ENCODE measurements at regions of chr17 and their contacts with region 1.

Region 1: GRCh38 chr17:47941236-47941994 is at the start of gene PNPO:
- DNase-seq: peak; percentile 74
- ATAC-seq: peak; percentile 99
- H3K4me3 Mint-ChIP-seq: peak within 1 kb of the TSS; percentile 91
- H3K27ac Mint-ChIP-seq: peak within 1 kb of the TSS; percentile 91
- H3K4me1 Mint-ChIP-seq: peaks cover 41% of the 10 kb centered on the region
- H3K27me3 Mint-ChIP-seq: no peaks in the 10 kb centered on the region
- CTCF ChIP-seq: no peak
- total RNA-seq, gene PNPO: 25.1 and 26.5 TPM in 2 replicates

Region 2: DNA sequence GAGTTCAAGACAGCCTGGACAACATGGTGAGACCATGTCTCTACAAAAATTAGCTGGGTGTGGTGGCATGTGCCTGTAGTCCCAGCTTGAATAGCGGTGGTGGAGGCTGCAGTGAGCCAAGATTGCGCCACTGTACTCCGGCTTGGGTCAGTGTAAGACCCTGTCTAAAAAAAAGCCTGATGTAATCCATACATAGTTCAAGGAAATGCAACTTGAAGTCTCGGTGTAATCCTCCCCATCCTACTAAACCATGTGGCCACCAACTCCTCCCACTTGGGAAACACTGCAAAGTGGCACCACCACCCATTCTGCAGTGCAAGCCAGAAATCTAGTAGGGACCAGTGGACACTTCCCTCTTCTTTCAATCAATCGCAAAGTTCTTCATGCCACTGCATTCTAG is 297.1 kb before region 1 on chr17:
- CTCF ChIA-PET with region 1: no interaction called
- POLR2A ChIA-PET with region 1: no interaction called
- intact Hi-C with region 1: no loop called
- DNase-seq: no peak
- ATAC-seq: no peak
- H3K4me3 Mint-ChIP-seq: no peak overlapping the region
- H3K27ac Mint-ChIP-seq: no peak overlapping the region
- H3K4me1 Mint-ChIP-seq: peaks cover 25% of the 10 kb centered on the region
- H3K27me3 Mint-ChIP-seq: no peaks in the 10 kb centered on the region
- CTCF ChIP-seq: no peak

Region 3: GRCh38 chr17:47675380-47676198 is 265.8 kb before region 1 on chr17:
- CTCF ChIA-PET with region 1: no interaction called
- POLR2A ChIA-PET with region 1: no interaction called
- intact Hi-C with region 1: no loop called
- DNase-seq: no peak
- ATAC-seq: no peak
- H3K4me3 Mint-ChIP-seq: no peak overlapping the region
- H3K27ac Mint-ChIP-seq: peak overlapping the region; percentile 41
- H3K4me1 Mint-ChIP-seq: peaks cover 5% of the 10 kb centered on the region
- H3K27me3 Mint-ChIP-seq: no peaks in the 10 kb centered on the region
- CTCF ChIP-seq: no peak

Region 4: GRCh38 chr17:47789611-47790561 is 151.5 kb before region 1 on chr17:
- CTCF ChIA-PET with region 1: no interaction called
- POLR2A ChIA-PET with region 1: no interaction called
- intact Hi-C with region 1: no loop called
- DNase-seq: peak; percentile 48
- ATAC-seq: peak; percentile 80
- H3K4me3 Mint-ChIP-seq: peak overlapping the region; percentile 74
- H3K27ac Mint-ChIP-seq: no peak overlapping the region
- H3K4me1 Mint-ChIP-seq: peaks cover 9% of the 10 kb centered on the region
- H3K27me3 Mint-ChIP-seq: peaks cover 54% of the 10 kb centered on the region
- CTCF ChIP-seq: no peak

Region 5: GRCh38 chr17:47831003-47831933 is 110.1 kb before region 1 on chr17 and contains the starts of genes LRRC46 and MRPL10:
- CTCF ChIA-PET with region 1: no interaction called
- POLR2A ChIA-PET with region 1: interaction called, 10 read pairs
- intact Hi-C with region 1: no loop called
- DNase-seq: peak; percentile 87
- ATAC-seq: peak; percentile 96
- H3K4me3 Mint-ChIP-seq: peak within 1 kb of the TSS; percentile 96
- H3K27ac Mint-ChIP-seq: peak within 1 kb of the TSS; percentile 92
- H3K4me1 Mint-ChIP-seq: peaks cover 29% of the 10 kb centered on the region
- H3K27me3 Mint-ChIP-seq: no peaks in the 10 kb centered on the region
- CTCF ChIP-seq: no peak
- total RNA-seq, gene LRRC46: 1.5 and 1.9 TPM in 2 replicates
- total RNA-seq, gene MRPL10: 36.4 and 37.4 TPM in 2 replicates

Region 6: DNA sequence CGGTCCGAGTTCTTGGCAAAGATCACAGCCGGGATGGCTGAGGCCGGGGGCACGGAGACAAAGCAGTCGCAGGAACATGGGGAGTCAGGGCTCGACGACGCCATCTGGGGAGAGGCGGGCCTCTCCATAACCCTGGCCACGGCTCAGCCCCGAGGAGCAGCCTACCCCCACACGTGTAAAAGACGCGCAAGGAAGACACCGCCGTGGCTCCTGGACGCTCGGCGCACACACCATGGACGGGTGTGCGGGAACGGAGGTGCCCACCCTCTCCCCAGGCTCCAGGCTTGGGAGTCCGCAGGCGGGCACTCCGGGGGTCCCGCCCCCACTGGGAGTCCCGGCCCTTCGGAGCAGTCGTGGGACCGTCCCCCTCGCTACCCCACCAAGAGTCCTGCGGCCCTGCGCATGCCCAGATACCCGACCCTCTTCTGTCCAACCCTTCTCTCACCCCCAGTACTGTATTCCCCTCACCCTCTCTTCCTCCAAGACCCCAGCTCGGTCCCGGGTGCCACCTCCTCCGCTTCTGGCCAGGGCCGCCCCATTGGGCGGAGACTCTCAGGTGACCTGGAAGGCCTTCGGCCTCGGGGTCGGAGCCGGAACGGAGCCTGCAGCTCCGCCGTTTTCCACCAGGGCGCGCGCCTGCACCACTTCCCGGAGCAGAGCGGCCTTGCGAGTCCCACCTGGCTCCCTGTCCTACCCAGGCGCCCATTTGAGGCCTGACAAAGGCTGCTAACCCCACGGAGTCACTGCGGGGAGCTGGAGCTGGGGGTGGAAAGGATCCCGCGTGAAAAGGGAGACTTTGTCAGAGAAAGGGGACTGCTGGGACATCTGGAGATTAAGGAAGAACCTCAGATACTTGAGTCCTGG is 100.4 kb before region 1 on chr17 and contains the start of gene SCRN2:
- CTCF ChIA-PET with region 1: interaction called, 5 read pairs
- POLR2A ChIA-PET with region 1: interaction called, 5 read pairs
- intact Hi-C with region 1: loop called (anchors 2 kb)
- DNase-seq: peak; percentile 91
- ATAC-seq: peak; percentile 94
- H3K4me3 Mint-ChIP-seq: peak within 1 kb of the TSS; percentile 98
- H3K27ac Mint-ChIP-seq: peak within 1 kb of the TSS; percentile 79
- H3K4me1 Mint-ChIP-seq: peaks cover 23% of the 10 kb centered on the region
- H3K27me3 Mint-ChIP-seq: peaks cover 16% of the 10 kb centered on the region
- CTCF ChIP-seq: peak; percentile 61
- total RNA-seq, gene SCRN2: 32.1 and 36.3 TPM in 2 replicates